CD8-positive, alpha-beta T cell (primary cell): ENCODE measurements at regions of chr9 and their contacts with region 1.

Region 1: GRCh38 chr9:2014696-2015580 is at the start of gene SMARCA2:
- DNase-seq: peak; percentile 96 to 98 (median 97)
- ATAC-seq: peak; percentile 79
- H3K4me3 ChIP-seq: peak within 1 kb of the TSS; percentile 78 to 97
- H3K4me3 Mint-ChIP-seq: peak within 1 kb of the TSS; percentile 100
- H3K27ac ChIP-seq: peak within 1 kb of the TSS; percentile 91 to 94
- H3K27ac Mint-ChIP-seq: peak within 1 kb of the TSS; percentile 100
- H3K4me1 ChIP-seq: peaks cover 18% of the 10 kb centered on the region
- H3K4me1 Mint-ChIP-seq: peaks cover 35% of the 10 kb centered on the region
- H3K27me3 ChIP-seq: no peaks in the 10 kb centered on the region
- H3K27me3 Mint-ChIP-seq: no peaks in the 10 kb centered on the region
- CTCF ChIP-seq: no peak
- total RNA-seq, gene SMARCA2: 198 to 215 TPM

Region 2: GRCh38 chr9:469672-470551 is 1545.0 kb before region 1 on chr9:
- CTCF ChIA-PET with region 1: no interaction called
- POLR2A ChIA-PET with region 1: no interaction called
- intact Hi-C with region 1: loop called in 1 of 2 experiments (anchors 5 kb)
- DNase-seq: peak; percentile 69 to 97 (median 91)
- ATAC-seq: peak; percentile 94
- H3K4me3 ChIP-seq: peak overlapping the region; percentile 69 to 75
- H3K4me3 Mint-ChIP-seq: peak overlapping the region; percentile 94
- H3K27ac ChIP-seq: peak overlapping the region; percentile 34 to 77
- H3K27ac Mint-ChIP-seq: peak overlapping the region; percentile 95
- H3K4me1 ChIP-seq: peaks cover 22% of the 10 kb centered on the region
- H3K4me1 Mint-ChIP-seq: peaks cover 25% of the 10 kb centered on the region
- H3K27me3 ChIP-seq: no peaks in the 10 kb centered on the region
- H3K27me3 Mint-ChIP-seq: no peaks in the 10 kb centered on the region
- CTCF ChIP-seq: no peak

Region 3: DNA sequence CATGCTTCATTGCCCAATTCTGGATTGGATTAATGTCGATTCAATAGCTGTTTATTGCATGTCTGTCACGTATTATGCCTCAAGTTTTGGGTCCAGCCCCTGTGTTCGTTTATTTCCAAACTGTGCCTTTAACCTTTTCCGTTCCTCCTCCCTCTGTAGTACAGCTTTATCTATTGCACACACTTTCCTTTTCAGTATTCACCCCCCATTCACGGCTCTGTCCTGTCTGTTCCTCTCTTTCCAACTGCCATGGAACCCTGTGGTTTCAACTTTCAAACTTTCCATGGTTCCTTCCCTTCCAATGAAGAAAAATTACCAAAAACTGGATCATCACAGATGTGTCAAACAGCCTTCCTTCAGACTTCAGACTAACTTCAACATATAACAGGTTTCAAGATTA is 17.3 kb after region 1 on chr9:
- CTCF ChIA-PET with region 1: interaction called, 3 read pairs
- POLR2A ChIA-PET with region 1: interaction called, 15 read pairs
- intact Hi-C with region 1: loop called in 1 of 2 experiments (anchors 2 kb)
- DNase-seq: no peak
- ATAC-seq: no peak
- H3K4me3 ChIP-seq: no peak overlapping the region
- H3K4me3 Mint-ChIP-seq: no peak overlapping the region
- H3K27ac ChIP-seq: no peak overlapping the region
- H3K27ac Mint-ChIP-seq: peak overlapping the region; percentile 12
- H3K4me1 ChIP-seq: peaks cover 34% of the 10 kb centered on the region
- H3K4me1 Mint-ChIP-seq: peaks cover 61% of the 10 kb centered on the region
- H3K27me3 ChIP-seq: no peaks in the 10 kb centered on the region
- H3K27me3 Mint-ChIP-seq: no peaks in the 10 kb centered on the region
- CTCF ChIP-seq: no peak

Region 4: GRCh38 chr9:2053883-2054845 is 39.2 kb after region 1 on chr9:
- CTCF ChIA-PET with region 1: interaction called, 7 read pairs
- POLR2A ChIA-PET with region 1: interaction called, 69 read pairs
- intact Hi-C with region 1: loop called (anchors 1 kb)
- DNase-seq: peak; percentile 43 to 91 (median 68)
- ATAC-seq: peak; percentile 96
- H3K4me3 ChIP-seq: peak overlapping the region in 1 of 2 experiments; percentile 20
- H3K4me3 Mint-ChIP-seq: peak overlapping the region; percentile 68
- H3K27ac ChIP-seq: peak overlapping the region; percentile 31 to 82
- H3K27ac Mint-ChIP-seq: peak overlapping the region; percentile 94
- H3K4me1 ChIP-seq: peaks cover 33% of the 10 kb centered on the region
- H3K4me1 Mint-ChIP-seq: peaks cover 63% of the 10 kb centered on the region
- H3K27me3 ChIP-seq: no peaks in the 10 kb centered on the region
- H3K27me3 Mint-ChIP-seq: no peaks in the 10 kb centered on the region
- CTCF ChIP-seq: no peak

Region 5: GRCh38 chr9:2418619-2419018 is 403.7 kb after region 1 on chr9:
- CTCF ChIA-PET with region 1: no interaction called
- POLR2A ChIA-PET with region 1: no interaction called
- intact Hi-C with region 1: no loop called
- DNase-seq: no peak
- ATAC-seq: no peak
- H3K4me3 ChIP-seq: no peak overlapping the region
- H3K4me3 Mint-ChIP-seq: no peak overlapping the region
- H3K27ac ChIP-seq: no peak overlapping the region
- H3K27ac Mint-ChIP-seq: no peak overlapping the region
- H3K4me1 ChIP-seq: no peaks in the 10 kb centered on the region
- H3K4me1 Mint-ChIP-seq: no peaks in the 10 kb centered on the region
- H3K27me3 ChIP-seq: no peaks in the 10 kb centered on the region
- H3K27me3 Mint-ChIP-seq: peaks cover 3% of the 10 kb centered on the region
- CTCF ChIP-seq: no peak